Activated CD4-positive, alpha-beta T cell treated with anti-CD3 and anti-CD28 coated beads, Interleukin-2, amount 10 ng/mL, durations not matched to agents 7 days and 5 days (primary cell): ENCODE measurements at regions of chr17 and their contacts with region 1.

Region 1: GRCh38 chr17:76697702-76698465 is 12.9 kb downstream of the MXRA7 start:
- DNase-seq: no peak
- H3K4me3 Mint-ChIP-seq: no peak overlapping the region
- H3K27ac Mint-ChIP-seq: no peak overlapping the region
- H3K4me1 Mint-ChIP-seq: peaks cover 30% of the 10 kb centered on the region
- H3K27me3 Mint-ChIP-seq: no peaks in the 10 kb centered on the region

Region 2: DNA sequence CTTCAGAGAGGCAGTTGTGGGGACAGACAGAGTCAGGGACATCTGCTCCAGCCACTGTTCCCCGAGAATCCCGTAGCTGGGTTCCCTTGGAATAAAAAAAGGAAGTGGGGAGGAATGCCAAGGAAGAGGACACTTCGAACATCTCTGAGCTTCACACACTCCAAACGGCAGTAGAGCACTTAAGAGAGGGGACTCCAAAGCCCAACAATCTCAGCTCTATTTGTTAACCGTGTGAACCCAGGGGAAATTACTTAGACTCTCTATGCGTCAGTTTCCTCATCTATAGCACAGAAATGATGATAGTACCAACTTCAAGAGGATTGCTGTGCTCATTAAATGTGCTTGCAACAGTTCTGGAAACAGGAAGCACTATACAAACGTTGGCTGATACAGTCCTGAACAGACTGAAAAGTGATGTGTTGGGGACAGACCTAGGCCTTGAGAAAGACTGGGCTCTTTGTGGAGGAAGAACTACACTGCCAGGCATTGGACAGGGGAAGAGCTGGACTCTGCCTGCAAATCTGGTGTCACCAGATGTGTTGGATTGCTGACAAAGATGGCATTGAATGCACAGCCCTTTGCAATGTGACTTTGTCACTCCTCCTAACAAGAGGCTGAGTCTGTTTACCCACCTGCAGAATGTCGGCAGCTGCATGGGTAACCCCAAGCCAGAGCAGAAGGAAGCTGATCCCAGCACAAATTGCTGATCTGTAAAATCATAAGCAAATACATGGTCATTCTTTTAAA is 100.0 kb before region 1 on chr17:
- CTCF ChIA-PET with region 1: no interaction called
- POLR2A ChIA-PET with region 1: no interaction called
- DNase-seq: no peak
- H3K4me3 Mint-ChIP-seq: no peak overlapping the region
- H3K27ac Mint-ChIP-seq: no peak overlapping the region
- H3K4me1 Mint-ChIP-seq: peaks cover 19% of the 10 kb centered on the region
- H3K27me3 Mint-ChIP-seq: peaks cover 11% of the 10 kb centered on the region

Region 3: DNA sequence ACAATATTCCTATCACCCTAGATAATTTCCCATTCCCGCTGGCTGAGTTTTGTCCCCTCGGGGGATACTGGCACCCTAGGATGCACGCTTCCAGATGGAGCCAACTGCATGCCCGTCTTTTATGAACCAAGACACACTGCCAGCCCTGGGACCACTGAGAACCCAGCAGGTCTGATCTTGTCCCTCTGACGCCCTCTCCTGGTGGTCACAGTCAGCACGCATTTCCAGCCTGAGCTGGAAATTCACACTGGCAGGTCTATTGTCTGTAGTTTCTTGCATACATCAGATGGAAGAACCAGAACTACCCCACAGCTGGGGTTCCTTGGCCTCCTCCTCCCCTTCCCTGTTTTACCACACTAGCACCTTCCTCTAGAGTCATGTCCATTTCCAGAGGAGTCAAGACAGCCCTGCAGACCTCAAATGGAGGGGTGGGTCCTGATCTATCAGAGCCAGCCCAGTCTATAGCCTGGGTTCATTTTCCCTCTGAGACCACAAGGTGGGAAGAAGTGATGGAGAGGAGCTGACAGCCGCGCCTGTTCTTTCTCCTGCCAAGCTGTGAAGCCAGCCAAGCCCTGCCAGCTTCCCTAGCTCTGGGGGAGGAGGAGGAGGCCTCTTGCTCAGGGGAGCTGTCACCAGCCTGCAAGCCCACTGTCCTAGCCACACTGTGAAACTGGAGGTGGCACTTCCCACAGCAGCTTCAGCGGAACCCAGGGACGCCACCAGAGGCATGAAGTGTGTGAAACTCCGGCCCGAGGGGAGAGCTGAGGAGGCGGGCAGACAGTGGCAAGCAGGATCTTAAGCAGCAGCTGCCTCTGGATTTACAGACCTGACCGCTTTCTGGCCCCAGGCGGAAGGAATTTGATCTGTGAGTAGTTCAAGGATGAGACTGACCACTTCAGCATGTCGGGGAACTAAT is 16.4 kb before region 1 on chr17:
- CTCF ChIA-PET with region 1: interaction called, 10 read pairs
- POLR2A ChIA-PET with region 1: no interaction called
- DNase-seq: peak; percentile 83
- H3K4me3 Mint-ChIP-seq: no peak overlapping the region
- H3K27ac Mint-ChIP-seq: peak overlapping the region; percentile 62
- H3K4me1 Mint-ChIP-seq: peaks cover 6% of the 10 kb centered on the region
- H3K27me3 Mint-ChIP-seq: no peaks in the 10 kb centered on the region